B cell (primary cell): ENCODE measurements at regions of chr3 and their contacts with region 1.

Region 1: DNA sequence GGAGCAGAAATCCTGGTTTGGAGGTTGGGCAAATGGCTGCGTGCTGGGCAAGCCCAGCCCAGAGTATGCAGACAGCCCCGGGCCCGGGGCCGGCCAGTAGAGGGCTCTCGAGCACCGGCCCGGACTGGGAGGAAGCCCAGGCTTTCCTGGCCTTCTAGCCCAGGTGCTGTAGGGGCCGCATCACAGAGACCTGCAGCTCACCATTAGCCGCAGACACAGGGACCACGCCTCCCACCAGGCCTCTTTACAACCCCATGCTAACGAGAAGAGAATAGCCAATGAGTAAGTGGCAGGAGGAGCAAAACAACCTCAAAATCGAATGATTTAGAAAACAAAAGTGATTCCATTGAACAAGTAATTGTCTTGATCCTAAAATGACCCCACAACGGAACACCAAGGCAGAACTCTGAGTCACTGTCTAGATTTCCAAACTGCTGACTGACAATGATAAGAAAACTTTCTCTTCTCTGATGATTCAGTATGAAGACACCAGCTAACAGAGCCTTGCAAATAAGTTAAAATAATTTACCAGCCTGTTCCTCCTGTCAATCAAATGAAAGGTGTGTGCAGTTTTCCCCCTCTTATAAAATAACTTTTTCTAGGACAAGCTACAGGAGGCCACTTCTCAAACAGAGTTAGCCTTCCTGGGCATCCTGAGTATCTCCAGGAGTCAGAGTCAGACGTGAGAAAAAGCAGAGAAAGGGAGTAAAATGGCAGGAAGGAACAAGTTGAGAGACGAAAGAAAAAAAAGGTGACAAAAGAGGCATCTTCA is 102.2 kb downstream of the DGKG start:
- DNase-seq: peak; percentile 80
- ATAC-seq: peak; percentile 65
- H3K4me3 ChIP-seq: no peak overlapping the region
- H3K4me3 Mint-ChIP-seq: peak overlapping the region; percentile 10
- H3K27ac ChIP-seq: no peak overlapping the region
- H3K27ac Mint-ChIP-seq: peak overlapping the region; percentile 41
- H3K4me1 ChIP-seq: peaks cover 31 to 35% of the 10 kb centered on the region in 2 donors
- H3K4me1 Mint-ChIP-seq: peaks cover 43% of the 10 kb centered on the region
- H3K27me3 ChIP-seq: no peaks in the 10 kb centered on the region
- H3K27me3 Mint-ChIP-seq: no peaks in the 10 kb centered on the region
- CTCF ChIP-seq: peak; percentile 81

Region 2: GRCh38 chr3:185983495-185984141 is 276.2 kb before region 1 on chr3:
- CTCF ChIA-PET with region 1: interaction called, 7 read pairs
- POLR2A ChIA-PET with region 1: no interaction called
- intact Hi-C with region 1: loop called (anchors 1 kb)
- DNase-seq: peak; percentile 77
- ATAC-seq: peak; percentile 84
- H3K4me3 ChIP-seq: no peak overlapping the region
- H3K4me3 Mint-ChIP-seq: no peak overlapping the region
- H3K27ac ChIP-seq: no peak overlapping the region
- H3K27ac Mint-ChIP-seq: no peak overlapping the region
- H3K4me1 ChIP-seq: peaks cover 6 to 8% of the 10 kb centered on the region in 2 donors
- H3K4me1 Mint-ChIP-seq: no peaks in the 10 kb centered on the region
- H3K27me3 ChIP-seq: peaks cover 0 to 16% (median 2%) of the 10 kb centered on the region in 4 experiments
- H3K27me3 Mint-ChIP-seq: peaks cover 10% of the 10 kb centered on the region
- CTCF ChIP-seq: peak; percentile 94

Region 3: GRCh38 chr3:186152889-186153292 is 106.9 kb before region 1 on chr3:
- CTCF ChIA-PET with region 1: interaction called, 6 read pairs
- POLR2A ChIA-PET with region 1: no interaction called
- intact Hi-C with region 1: loop called (anchors 1 kb)
- DNase-seq: peak; percentile 88
- ATAC-seq: peak; percentile 90
- H3K4me3 ChIP-seq: peak overlapping the region in 3 of 5 experiments; percentile 29 to 34 (median 30)
- H3K4me3 Mint-ChIP-seq: peak overlapping the region; percentile 60
- H3K27ac ChIP-seq: peak overlapping the region; percentile 81 to 89
- H3K27ac Mint-ChIP-seq: peak overlapping the region; percentile 95
- H3K4me1 ChIP-seq: peaks cover 28 to 40% of the 10 kb centered on the region in 2 donors
- H3K4me1 Mint-ChIP-seq: peaks cover 35% of the 10 kb centered on the region
- H3K27me3 ChIP-seq: no peaks in the 10 kb centered on the region
- H3K27me3 Mint-ChIP-seq: no peaks in the 10 kb centered on the region
- CTCF ChIP-seq: no peak

Region 4: GRCh38 chr3:186342197-186342596 is 82.4 kb after region 1 on chr3:
- CTCF ChIA-PET with region 1: interaction called, 6 read pairs
- POLR2A ChIA-PET with region 1: no interaction called
- intact Hi-C with region 1: loop called (anchors 5 kb)
- DNase-seq: peak; percentile 50
- ATAC-seq: peak; percentile 47
- H3K4me3 ChIP-seq: no peak overlapping the region
- H3K4me3 Mint-ChIP-seq: peak overlapping the region; percentile 3
- H3K27ac ChIP-seq: peak overlapping the region; percentile 11 to 15
- H3K27ac Mint-ChIP-seq: peak overlapping the region; percentile 33
- H3K4me1 ChIP-seq: peaks cover 22 to 35% of the 10 kb centered on the region in 2 donors
- H3K4me1 Mint-ChIP-seq: peaks cover 51% of the 10 kb centered on the region
- H3K27me3 ChIP-seq: no peaks in the 10 kb centered on the region
- H3K27me3 Mint-ChIP-seq: no peaks in the 10 kb centered on the region
- CTCF ChIP-seq: no peak

Region 5: GRCh38 chr3:186534113-186534669 is 274.4 kb after region 1 on chr3:
- CTCF ChIA-PET with region 1: interaction called, 559 read pairs
- POLR2A ChIA-PET with region 1: interaction called, 8 read pairs
- intact Hi-C with region 1: loop called (anchors 1 kb)
- DNase-seq: peak; percentile 92
- ATAC-seq: peak; percentile 80
- H3K4me3 ChIP-seq: peak overlapping the region in 1 of 5 experiments; percentile 18
- H3K4me3 Mint-ChIP-seq: peak overlapping the region; percentile 88
- H3K27ac ChIP-seq: peak overlapping the region; percentile 82 to 87
- H3K27ac Mint-ChIP-seq: peak overlapping the region; percentile 94
- H3K4me1 ChIP-seq: peaks cover 57 to 66% of the 10 kb centered on the region in 2 donors
- H3K4me1 Mint-ChIP-seq: peaks cover 69% of the 10 kb centered on the region
- H3K27me3 ChIP-seq: peaks cover 0 to 11% (median 5%) of the 10 kb centered on the region in 4 experiments
- H3K27me3 Mint-ChIP-seq: no peaks in the 10 kb centered on the region
- CTCF ChIP-seq: no peak

Region 6: GRCh38 chr3:186821429-186822367 is 561.9 kb after region 1 on chr3:
- CTCF ChIA-PET with region 1: no interaction called
- POLR2A ChIA-PET with region 1: no interaction called
- intact Hi-C with region 1: loop called (anchors 5 kb)
- DNase-seq: peak; percentile 66
- ATAC-seq: no peak
- H3K4me3 ChIP-seq: no peak overlapping the region
- H3K4me3 Mint-ChIP-seq: no peak overlapping the region
- H3K27ac ChIP-seq: no peak overlapping the region
- H3K27ac Mint-ChIP-seq: no peak overlapping the region
- H3K4me1 ChIP-seq: peaks cover 19 to 21% of the 10 kb centered on the region in 2 donors
- H3K4me1 Mint-ChIP-seq: peaks cover 19% of the 10 kb centered on the region
- H3K27me3 ChIP-seq: peaks cover 0 to 27% (median 15%) of the 10 kb centered on the region in 4 experiments
- H3K27me3 Mint-ChIP-seq: peaks cover 19% of the 10 kb centered on the region
- CTCF ChIP-seq: peak; percentile 80